ENCODE measurements at regions of chr12 and their contacts with region 1.

Region 1: DNA sequence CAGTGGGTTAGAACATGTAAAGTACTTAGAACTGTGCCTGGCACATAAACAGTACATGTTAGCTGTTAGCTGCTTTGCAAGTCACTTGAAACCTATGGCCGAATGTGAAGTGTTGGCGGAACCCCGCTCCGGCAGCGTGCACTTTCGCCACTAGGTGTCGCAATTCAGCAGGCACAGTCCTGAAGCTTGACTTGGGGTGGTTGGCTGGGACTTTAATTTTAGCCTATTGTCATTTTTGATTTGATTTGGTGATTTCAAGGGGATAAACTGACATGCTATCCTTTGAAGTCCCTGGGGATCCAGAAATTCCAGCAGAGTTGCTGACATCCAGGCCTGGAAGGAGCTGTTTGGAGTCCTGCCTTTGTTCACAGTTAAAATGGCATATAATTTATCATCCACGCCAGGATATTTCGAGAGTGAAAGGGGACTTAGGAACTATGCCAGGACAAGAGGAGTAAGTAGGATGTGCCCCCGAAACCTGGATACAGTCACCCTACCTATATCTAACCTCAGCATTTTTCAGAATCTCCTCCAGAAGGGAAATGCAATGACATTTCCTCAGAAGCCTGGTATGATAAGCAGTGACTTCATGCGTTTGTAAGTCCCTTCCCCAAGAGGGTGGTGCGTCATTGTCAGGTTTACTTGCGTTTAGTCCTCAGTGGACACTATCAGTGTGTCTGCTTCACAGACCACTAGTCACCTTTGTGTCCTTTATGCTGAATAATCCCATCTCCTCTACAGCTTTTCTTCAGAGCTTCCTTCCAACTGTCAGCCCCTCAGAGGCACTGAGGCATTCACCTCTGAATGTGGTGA is 3.5 kb upstream of the TSPAN9 start:
- DNase-seq: peak; percentile 82
- H3K27ac ChIP-seq: no peak overlapping the region
- CTCF ChIP-seq: peak; percentile 83

Region 2: GRCh38 chr12:1147821-1148220 is 1925.8 kb before region 1 on chr12:
- CTCF ChIA-PET with region 1: no interaction called
- POLR2A ChIA-PET with region 1: no interaction called
- DNase-seq: no peak
- H3K27ac ChIP-seq: no peak overlapping the region
- CTCF ChIP-seq: no peak

Region 3: DNA sequence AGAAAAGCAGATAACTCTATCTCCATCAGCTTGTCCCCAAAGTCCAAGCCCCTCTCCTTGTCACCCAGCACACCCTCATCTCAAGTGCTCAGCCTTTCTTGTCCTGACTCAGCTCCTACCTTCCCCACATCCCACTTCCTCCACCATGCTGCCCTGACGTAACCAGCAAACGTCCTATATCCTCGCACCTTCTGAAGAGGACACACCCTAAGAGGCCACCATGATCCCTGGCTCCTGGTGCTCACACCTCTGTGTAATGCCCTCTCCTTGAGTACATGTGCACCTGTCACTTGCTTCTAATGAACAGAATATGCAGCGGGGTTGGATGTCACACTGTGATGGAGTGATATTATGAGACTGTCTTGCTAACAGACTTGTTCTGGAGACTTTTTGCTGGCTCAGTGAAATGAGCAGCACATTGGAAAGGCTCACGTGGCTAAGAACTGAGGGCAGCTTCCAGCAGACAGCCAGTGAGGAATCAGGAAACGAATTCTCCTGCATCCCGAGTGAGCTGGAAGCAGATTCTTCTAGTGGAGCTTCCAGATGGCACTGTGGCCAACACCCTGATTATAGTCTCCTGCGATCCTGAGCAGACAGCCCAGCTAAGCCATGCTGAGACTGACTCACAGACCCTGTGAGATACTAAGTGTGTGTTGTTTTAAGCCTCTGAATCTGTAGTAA is 12.7 kb before region 1 on chr12:
- CTCF ChIA-PET with region 1: interaction called, 16 read pairs
- POLR2A ChIA-PET with region 1: no interaction called
- DNase-seq: no peak
- H3K27ac ChIP-seq: no peak overlapping the region
- CTCF ChIP-seq: no peak

Measured in RWPE1 (cell line).